Posterior vena cava (tissue), 2 donors: ENCODE measurements at regions of chr2 and their contacts with region 1.

Region 1: DNA sequence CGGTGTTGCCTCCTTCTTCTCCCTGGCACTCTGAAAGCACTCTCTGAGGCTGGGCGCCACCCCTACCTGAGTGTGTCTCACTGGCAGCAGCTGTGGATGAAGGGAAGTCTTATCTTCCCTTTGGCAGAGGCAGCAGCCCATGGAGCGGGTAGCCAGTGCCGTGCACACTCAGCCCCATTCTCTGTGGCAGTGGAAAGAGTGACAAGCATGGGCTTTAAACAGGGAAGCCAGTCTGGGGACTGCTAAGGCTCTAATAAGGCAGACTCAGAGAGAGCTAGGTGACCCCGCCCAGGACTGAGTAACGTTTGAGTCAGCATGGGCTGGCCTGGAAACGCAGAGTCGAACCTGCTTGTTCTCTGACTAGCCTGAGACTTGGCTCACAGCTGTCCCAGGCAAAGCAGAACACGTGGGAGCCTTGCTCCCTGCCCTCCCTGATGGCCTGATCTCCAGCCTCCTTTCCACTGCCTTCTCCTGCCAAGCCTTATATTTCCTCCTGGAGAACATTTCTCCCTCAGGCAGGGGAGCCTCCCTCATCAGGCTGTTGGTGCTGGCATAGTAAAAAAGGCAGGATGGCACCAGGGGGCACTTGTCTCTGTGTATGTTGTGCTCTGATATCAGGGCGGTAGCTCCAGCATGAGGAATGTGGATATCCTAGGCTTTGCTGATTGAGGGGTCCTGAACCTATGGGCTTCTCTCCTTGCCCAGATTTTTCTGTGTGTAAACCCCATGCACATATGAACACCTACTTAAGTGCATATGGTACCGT is 93.9 kb upstream of the LGALSL start:
- DNase-seq: peak; percentile 96

Region 2: DNA sequence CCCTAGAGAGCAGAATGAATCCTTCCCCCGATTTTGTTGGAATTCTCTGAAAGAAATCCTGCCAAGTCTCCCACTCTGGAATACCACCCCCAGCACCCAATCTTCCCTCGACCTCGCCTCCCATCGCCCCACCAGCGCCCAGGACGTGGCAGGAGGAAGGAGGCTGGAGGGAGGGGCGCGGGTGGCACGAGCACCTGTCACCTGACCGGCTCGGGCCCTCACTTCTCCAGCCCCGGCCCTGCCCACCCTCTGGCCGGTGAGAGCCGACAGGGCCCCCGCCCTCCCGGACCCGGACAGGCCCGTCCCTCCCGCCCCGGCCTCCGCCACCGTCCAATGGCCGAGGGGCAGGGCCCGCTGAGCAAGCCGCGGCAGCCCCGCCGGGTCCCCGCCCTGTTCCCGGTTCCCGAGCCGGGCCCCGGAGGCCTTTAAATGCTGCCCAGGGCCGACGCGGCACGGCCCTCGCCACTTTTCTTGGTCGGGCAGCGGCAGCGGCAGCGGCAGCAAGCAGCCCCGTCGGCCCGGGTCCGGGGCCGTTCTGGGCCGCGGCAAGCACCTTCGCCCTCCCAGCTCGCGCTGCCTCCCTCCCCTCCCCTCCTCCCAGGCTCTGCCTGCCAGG is 93.8 kb after region 1 on chr2 and contains the start of gene LGALSL:
- intact Hi-C with region 1: loop called in 1 of 2 experiments (anchors 5 kb)
- DNase-seq: peak; percentile 90
- total RNA-seq, gene LGALSL: 20.5 to 23.4 TPM